ENCODE measurements at regions of chr2 and their contacts with region 1.

Region 1: GRCh38 chr2:190904640-190905261 is 24.1 kb downstream of the GLS start:
- DNase-seq: peak; percentile 73
- ATAC-seq: peak; percentile 65
- H3K4me3 ChIP-seq: no peak overlapping the region
- H3K27ac ChIP-seq: no peak overlapping the region; the same call in 1 of the 2 replicates
- H3K4me1 ChIP-seq: peaks cover 6% of the 10 kb centered on the region; the same call in 1 of the 2 replicates
- H3K27me3 ChIP-seq: no peaks in the 10 kb centered on the region
- CTCF ChIP-seq: no peak
- POLR2A ChIP-seq: no peak
- RAD21 ChIP-seq: no peak

Region 2: DNA sequence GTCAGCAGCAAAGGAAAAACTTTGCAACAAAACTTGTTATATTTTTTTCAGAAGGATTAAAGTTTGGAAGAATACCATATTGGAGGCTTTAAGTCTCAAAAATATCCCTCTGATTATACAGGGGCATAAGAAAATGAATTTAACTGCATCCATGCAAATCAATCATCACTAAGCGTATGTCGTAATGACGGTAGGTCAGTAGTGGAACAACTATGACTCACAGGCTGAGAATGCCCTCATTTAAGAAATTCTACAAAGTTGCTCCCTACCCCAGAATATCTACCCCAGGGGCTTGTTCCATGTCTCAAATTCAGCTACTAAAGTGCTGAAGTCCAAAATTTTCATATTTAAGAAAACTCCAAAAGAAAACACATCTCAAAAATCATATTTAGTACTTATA is 268.4 kb before region 1 on chr2:
- CTCF ChIA-PET with region 1: no interaction called
- POLR2A ChIA-PET with region 1: no interaction called
- dilution Hi-C with region 1: no loop called
- in situ Hi-C with region 1: no loop called
- intact Hi-C with region 1: no loop called
- DNase-seq: peak; percentile 75
- ATAC-seq: no peak
- H3K4me3 ChIP-seq: no peak overlapping the region
- H3K27ac ChIP-seq: no peak overlapping the region
- H3K4me1 ChIP-seq: peaks cover 7% of the 10 kb centered on the region
- H3K27me3 ChIP-seq: no peaks in the 10 kb centered on the region
- CTCF ChIP-seq: no peak
- POLR2A ChIP-seq: no peak
- RAD21 ChIP-seq: no peak

Region 3: DNA sequence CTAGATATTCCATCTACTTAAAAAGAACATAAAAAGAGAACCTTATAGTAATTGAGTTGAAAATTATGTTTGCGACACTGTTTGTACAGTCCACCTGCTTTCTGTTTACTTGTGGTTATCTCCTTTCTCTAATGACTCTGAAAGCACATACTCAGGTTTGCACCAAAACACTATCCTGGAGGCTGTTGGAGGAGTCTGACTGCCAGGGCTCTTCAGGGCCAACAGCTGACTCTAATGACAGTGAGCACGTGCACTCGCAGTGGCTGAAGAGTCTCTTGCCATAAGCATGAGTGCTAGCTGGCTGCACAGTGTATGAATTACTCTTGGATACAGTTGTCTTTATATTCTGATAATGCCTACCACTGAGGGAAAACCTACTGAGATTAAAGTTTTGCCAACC is 40.8 kb before region 1 on chr2:
- CTCF ChIA-PET with region 1: no interaction called
- POLR2A ChIA-PET with region 1: no interaction called
- dilution Hi-C with region 1: no loop called
- in situ Hi-C with region 1: no loop called
- intact Hi-C with region 1: no loop called
- DNase-seq: no peak
- ATAC-seq: peak; percentile 1; the same call in 1 of the 2 replicates
- H3K4me3 ChIP-seq: no peak overlapping the region
- H3K27ac ChIP-seq: peak overlapping the region; percentile 89
- H3K4me1 ChIP-seq: peaks cover 23% of the 10 kb centered on the region
- H3K27me3 ChIP-seq: no peaks in the 10 kb centered on the region
- CTCF ChIP-seq: no peak
- POLR2A ChIP-seq: no peak
- RAD21 ChIP-seq: no peak

Region 4: DNA sequence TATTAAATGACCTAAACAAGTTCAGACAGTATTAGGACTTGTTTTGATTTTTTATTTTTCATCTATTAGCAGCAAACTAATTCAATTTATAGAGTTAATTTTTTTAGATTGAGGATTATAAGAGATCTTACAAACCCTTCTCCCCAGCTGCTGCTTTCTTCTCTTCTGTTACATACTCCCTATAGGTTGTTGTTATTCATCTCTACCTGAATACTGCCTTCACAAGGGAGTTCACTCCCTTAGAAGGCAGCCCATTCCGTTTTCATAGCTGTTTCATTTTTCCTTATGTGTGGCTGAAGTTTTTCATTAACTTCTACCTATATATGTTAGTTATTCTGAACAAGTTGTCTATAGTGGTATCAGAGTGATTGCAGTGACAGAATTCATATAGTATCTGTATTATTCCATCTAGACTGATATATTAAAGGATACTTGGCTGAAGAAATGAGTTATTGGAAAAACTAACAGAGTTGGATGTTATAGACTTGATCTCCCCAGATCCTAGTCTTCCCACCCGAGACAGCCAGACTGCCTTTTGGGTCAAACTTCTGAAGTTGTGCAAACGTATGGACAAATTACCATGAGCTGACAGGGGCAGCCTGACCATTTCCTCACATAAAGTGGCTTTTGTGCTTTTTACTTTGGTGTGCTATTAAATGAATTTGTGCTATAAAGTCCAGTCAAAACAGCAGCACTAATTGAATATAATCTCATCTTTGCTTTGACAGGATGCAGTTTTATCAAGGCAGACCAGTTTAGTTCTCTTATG is 15.4 kb before region 1 on chr2:
- CTCF ChIA-PET with region 1: interaction called, 6 read pairs
- POLR2A ChIA-PET with region 1: no interaction called
- dilution Hi-C with region 1: no loop called
- in situ Hi-C with region 1: no loop called
- intact Hi-C with region 1: loop called (anchors 2 kb)
- DNase-seq: no peak
- ATAC-seq: no peak
- H3K4me3 ChIP-seq: no peak overlapping the region
- H3K27ac ChIP-seq: no peak overlapping the region
- H3K4me1 ChIP-seq: peaks cover 2% of the 10 kb centered on the region; the same call in 1 of the 2 replicates
- H3K27me3 ChIP-seq: no peaks in the 10 kb centered on the region
- CTCF ChIP-seq: no peak
- POLR2A ChIP-seq: no peak
- RAD21 ChIP-seq: no peak

Region 5: GRCh38 chr2:192215096-192215877 is 1310.5 kb after region 1 on chr2:
- CTCF ChIA-PET with region 1: no interaction called
- POLR2A ChIA-PET with region 1: no interaction called
- dilution Hi-C with region 1: no loop called
- in situ Hi-C with region 1: no loop called
- intact Hi-C with region 1: no loop called
- DNase-seq: no peak
- ATAC-seq: no peak
- H3K4me3 ChIP-seq: no peak overlapping the region
- H3K27ac ChIP-seq: no peak overlapping the region
- H3K4me1 ChIP-seq: no peaks in the 10 kb centered on the region
- H3K27me3 ChIP-seq: no peaks in the 10 kb centered on the region
- CTCF ChIP-seq: no peak
- POLR2A ChIP-seq: no peak
- RAD21 ChIP-seq: no peak

Measured in IMR-90 (cell line).